Ascending aorta (tissue), 2 donors: ENCODE measurements at regions of chr3 and their contacts with region 1.

Region 1: GRCh38 chr3:102129760-102130608 is 280.7 kb downstream of the NFKBIZ start:
- DNase-seq: peak in 1 of 2 donors; percentile 79
- H3K4me3 ChIP-seq: no peak overlapping the region
- H3K27ac ChIP-seq: peak overlapping the region; percentile 75 to 88
- H3K4me1 ChIP-seq: peaks cover 5 to 33% of the 10 kb centered on the region in 2 donors
- H3K27me3 ChIP-seq: no peaks in the 10 kb centered on the region
- CTCF ChIP-seq: no peak

Region 2: GRCh38 chr3:102016417-102016816 is 113.6 kb before region 1 on chr3:
- intact Hi-C with region 1: no loop called
- DNase-seq: no peak
- H3K4me3 ChIP-seq: no peak overlapping the region
- H3K27ac ChIP-seq: no peak overlapping the region
- H3K4me1 ChIP-seq: no peaks in the 10 kb centered on the region
- H3K27me3 ChIP-seq: no peaks in the 10 kb centered on the region
- CTCF ChIP-seq: no peak

Region 3: GRCh38 chr3:102156426-102156825 is 26.4 kb after region 1 on chr3:
- intact Hi-C with region 1: loop called (anchors 1 kb)
- DNase-seq: peak in 1 of 2 donors; percentile 79
- H3K4me3 ChIP-seq: no peak overlapping the region
- H3K27ac ChIP-seq: peak overlapping the region; percentile 62 to 69
- H3K4me1 ChIP-seq: no peaks in the 10 kb centered on the region
- H3K27me3 ChIP-seq: no peaks in the 10 kb centered on the region
- CTCF ChIP-seq: no peak

Region 4: DNA sequence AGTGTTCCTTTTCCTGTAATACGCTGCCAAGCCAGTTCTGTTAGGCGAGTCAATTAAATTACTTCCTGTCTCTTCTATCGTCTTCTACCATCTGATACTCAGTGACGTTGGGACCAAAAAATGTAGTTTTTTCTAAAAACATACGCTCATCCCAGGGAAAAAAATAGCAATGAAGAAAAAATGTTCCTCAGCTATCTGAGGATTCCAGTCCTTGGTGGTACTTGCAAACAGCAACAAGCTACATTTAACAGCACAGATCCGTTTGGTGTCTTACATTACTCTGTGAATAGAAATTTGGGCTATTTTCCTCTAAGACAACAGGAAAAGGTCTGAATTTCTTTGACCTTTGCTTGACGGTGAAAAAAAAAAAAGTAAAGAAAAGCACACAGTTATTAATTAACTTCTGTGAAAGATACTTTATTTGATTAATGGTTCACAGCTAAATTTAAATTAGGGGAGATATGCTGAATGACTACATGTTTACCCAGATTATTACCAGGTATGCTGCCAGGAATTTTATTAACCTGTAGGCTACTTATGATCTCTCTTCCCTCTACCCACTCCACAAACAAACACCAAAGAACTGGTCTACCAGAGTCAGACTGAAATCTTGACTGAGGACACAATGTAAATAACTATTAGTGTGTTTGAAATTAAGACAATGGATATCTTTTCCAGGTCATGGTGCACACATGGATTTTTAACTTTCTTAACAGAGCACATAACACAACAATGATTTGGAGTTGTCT is 50.5 kb after region 1 on chr3:
- intact Hi-C with region 1: loop called (anchors 10 kb)
- DNase-seq: no peak
- H3K4me3 ChIP-seq: peak overlapping the region in 1 of 2 donors; percentile 27
- H3K27ac ChIP-seq: peak overlapping the region; percentile 81 to 84
- H3K4me1 ChIP-seq: peaks cover 3 to 30% of the 10 kb centered on the region in 2 donors
- H3K27me3 ChIP-seq: no peaks in the 10 kb centered on the region
- CTCF ChIP-seq: no peak

Region 5: DNA sequence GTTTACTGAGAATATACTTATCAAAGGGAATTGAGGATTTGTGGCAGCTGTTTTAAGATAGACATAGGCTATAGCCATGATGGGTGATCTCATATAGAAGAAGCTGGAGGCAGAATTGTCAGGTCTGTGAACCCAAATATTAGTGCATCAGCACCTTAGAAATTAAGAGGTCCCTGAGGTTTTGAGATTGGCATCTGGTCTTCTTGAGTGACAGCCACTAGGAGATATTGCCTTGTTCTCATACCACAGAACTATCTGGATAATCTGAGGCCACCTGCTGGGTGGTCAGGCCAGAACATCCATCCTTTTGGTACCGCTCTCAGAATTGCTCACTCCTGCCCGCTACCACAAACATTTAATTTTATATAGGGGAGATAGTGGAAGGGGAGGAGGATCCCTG is 94.1 kb after region 1 on chr3:
- intact Hi-C with region 1: loop called (anchors 5 kb)
- DNase-seq: no peak
- H3K4me3 ChIP-seq: no peak overlapping the region
- H3K27ac ChIP-seq: no peak overlapping the region
- H3K4me1 ChIP-seq: no peaks in the 10 kb centered on the region
- H3K27me3 ChIP-seq: no peaks in the 10 kb centered on the region
- CTCF ChIP-seq: peak; percentile 15 to 49 (median 21)